ENCODE measurements at regions of chr3 and their contacts with region 1.

Region 1: DNA sequence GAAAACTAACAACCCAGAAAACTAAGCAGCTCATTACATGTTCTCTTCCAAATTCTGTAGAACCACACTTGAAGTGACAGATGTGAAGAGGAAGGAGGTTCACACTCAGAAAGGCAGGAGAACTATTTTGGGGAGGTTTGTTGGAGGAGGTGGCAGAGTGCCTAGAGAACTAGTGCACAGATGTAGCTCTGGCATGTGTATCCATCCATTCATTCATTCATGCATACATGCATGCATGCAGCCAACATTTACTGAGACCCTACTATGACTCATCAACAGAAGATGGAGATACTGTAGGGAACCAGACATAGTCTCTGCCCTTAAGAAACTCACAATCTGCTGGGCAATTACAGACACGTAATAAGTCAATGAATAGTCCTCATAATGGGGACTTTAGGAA is 116.7 kb downstream of the ERC2 start:
- DNase-seq: no peak
- ATAC-seq: no peak
- H3K4me3 ChIP-seq: no peak overlapping the region
- H3K27ac ChIP-seq: no peak overlapping the region
- H3K4me1 ChIP-seq: no peaks in the 10 kb centered on the region
- H3K27me3 ChIP-seq: no peaks in the 10 kb centered on the region
- CTCF ChIP-seq: no peak

Region 2: DNA sequence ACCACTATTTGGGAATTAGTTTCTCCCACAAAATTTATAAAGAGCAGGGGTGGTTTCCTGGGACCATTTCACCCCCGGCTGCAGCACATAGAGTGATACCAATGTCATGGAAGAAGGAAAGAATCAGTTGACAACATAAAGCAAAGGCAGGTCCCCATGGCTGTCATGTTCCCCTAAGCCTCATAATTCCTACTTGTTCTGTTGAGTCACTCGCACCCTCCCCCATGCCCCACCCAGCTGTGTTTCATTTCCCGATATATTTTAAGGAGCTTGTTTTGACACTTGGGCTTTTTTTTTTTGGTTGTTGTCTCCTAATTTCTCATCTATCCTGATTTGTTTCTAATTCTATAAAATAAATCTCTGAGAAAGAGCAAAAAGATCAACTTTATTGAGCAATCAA is 91.8 kb after region 1 on chr3:
- intact Hi-C with region 1: loop called in 1 of 2 experiments (anchors 5 kb)
- DNase-seq: no peak
- ATAC-seq: no peak
- H3K4me3 ChIP-seq: no peak overlapping the region
- H3K27ac ChIP-seq: no peak overlapping the region
- H3K4me1 ChIP-seq: no peaks in the 10 kb centered on the region
- H3K27me3 ChIP-seq: peaks cover 0 to 16% of the 10 kb centered on the region in 2 donors
- CTCF ChIP-seq: no peak

Region 3: DNA sequence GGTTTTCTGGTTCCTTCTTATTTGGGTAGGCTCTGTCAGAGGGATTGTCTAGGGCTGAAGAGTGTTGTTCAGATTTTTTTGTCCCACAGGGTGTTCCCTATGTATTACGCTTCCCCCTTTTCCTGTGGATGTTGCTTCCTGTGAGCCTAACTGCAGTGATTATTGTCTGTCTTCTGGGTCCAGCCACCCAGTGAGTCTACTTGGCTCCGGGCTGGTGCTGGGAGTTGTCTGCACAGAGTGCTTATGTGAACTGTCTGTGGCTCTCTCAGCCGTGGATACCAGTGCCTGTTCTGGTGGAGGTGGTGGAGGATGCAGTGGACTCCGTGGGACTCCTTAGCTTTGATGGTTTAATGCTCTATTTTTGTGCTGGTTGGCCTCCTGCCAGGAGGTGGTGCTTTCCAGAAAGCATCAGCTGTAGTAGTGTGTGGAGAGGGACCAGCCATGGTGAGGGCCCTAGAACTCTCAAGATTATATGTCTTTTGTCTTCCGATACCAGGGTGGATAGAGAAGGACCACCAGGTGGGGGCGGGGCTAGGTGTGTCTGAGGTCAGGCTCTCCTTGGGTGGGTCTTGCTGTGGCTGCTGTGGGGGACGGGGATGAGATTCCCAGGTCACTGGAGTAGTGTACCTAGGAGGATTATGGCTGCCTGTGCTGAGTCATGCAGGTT is 259.3 kb after region 1 on chr3:
- intact Hi-C with region 1: no loop called
- DNase-seq: peak in 1 of 4 donors; percentile 46
- ATAC-seq: no peak
- H3K4me3 ChIP-seq: no peak overlapping the region
- H3K27ac ChIP-seq: no peak overlapping the region
- H3K4me1 ChIP-seq: no peaks in the 10 kb centered on the region
- H3K27me3 ChIP-seq: no peaks in the 10 kb centered on the region
- CTCF ChIP-seq: no peak